H1 (cell line): ENCODE measurements at regions of chr13 and their contacts with region 1.

Region 1: GRCh38 chr13:51241720-51242119 is 19.5 kb downstream of the FAM124A start:
- DNase-seq: peak in 1 of 2 experiments; percentile 24
- H3K4me3 ChIP-seq: no peak overlapping the region
- H3K27ac ChIP-seq: no peak overlapping the region
- H3K4me1 ChIP-seq: peaks cover 22 to 35% (median 29%) of the 10 kb centered on the region in 4 experiments
- H3K27me3 ChIP-seq: no peaks in the 10 kb centered on the region
- CTCF ChIP-seq: no peak
- EP300 ChIP-seq: no peak
- POLR2A ChIP-seq: no peak
- RAD21 ChIP-seq: no peak

Region 2: DNA sequence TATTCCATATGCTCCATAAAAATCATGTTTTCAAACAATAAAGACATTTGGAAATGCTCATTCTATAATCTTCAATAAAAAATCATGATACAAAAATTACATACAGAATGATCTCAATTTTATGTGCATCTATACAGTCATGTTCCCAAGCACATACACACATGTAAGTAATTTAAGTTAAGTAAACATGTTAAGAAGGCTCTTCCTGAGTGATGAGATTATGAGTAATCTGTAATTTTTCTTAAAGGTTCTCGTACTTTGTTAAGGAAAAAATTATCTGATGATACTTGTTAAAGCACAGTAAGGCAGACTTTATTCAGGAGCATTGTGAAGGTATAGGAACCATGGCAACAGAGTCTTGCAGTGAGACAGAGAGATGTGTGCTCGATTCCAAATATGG is 368.3 kb before region 1 on chr13:
- CTCF ChIA-PET with region 1: no interaction called
- POLR2A ChIA-PET with region 1: no interaction called
- DNase-seq: no peak
- H3K4me3 ChIP-seq: no peak overlapping the region
- H3K27ac ChIP-seq: no peak overlapping the region
- H3K4me1 ChIP-seq: no peaks in the 10 kb centered on the region
- H3K27me3 ChIP-seq: no peaks in the 10 kb centered on the region
- CTCF ChIP-seq: no peak
- EP300 ChIP-seq: no peak
- POLR2A ChIP-seq: no peak
- RAD21 ChIP-seq: no peak

Region 3: DNA sequence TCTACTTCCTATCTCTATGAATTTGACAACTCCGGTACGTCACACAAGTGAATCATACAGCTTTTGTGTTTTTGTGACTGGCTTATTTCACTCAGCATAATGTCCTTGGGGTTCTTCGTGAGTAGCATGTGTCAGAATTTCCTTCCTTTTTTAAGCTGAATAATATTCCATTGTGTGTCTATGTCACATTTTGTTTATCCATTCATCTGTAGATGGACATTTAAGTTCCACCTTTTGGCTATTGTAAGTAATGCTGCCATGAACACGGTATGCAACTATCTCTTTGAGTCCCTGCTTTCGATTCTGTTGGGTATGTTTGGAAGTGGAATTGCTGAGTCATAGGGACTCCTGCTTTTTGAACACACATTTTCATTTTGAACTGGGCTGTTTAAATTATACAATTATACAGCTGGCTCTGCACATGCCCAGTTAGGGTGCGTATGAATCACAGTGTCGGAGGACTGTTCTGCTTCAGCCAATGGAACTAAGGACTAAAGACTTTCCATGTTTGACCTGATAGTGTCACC is 87.6 kb before region 1 on chr13:
- CTCF ChIA-PET with region 1: interaction called, 6 read pairs
- POLR2A ChIA-PET with region 1: interaction called, 10 read pairs
- DNase-seq: peak in 1 of 2 experiments; percentile 31
- H3K4me3 ChIP-seq: no peak overlapping the region
- H3K27ac ChIP-seq: no peak overlapping the region
- H3K4me1 ChIP-seq: peaks cover 8 to 23% (median 18%) of the 10 kb centered on the region in 4 experiments; a peak in 6 of 7 replicates
- H3K27me3 ChIP-seq: no peaks in the 10 kb centered on the region
- CTCF ChIP-seq: no peak
- EP300 ChIP-seq: no peak
- POLR2A ChIP-seq: no peak
- RAD21 ChIP-seq: no peak

Region 4: DNA sequence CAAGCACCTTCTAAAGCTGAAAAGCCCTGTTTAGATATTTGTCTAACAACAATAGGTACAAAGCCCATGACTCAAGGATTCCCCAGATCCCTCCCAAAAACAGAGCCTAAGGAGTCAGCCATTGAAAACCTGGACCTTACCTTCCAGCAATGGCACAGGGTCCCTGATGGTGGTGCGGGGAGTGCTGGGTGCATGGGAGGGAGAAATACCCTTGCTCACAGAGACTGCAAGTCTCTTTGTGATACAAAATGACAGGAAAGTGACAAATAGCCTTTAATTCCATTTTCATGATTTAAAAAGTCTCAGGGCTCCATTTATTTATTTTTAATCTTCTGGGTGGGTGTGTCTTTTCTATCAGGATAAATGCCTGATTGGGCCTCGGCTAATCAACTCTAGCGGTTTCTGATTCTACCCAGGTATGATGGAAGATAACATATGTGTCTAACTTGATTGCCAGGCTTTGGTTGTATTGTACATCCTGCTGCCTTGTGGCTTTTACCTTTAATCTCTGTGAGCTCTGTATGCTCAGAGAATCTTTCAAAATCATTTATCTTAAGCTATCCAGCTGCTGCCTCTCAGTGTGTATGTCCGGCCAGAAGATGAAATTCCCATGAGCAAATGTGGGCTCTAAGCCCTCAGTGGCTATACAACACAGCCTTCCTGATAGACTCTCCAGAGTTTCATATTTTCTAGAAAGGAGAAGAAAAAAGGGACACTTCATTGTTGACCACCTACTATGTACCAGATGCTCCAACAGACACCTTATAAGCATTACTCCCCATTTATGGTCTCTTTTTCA is 74.1 kb before region 1 on chr13:
- CTCF ChIA-PET with region 1: no interaction called
- POLR2A ChIA-PET with region 1: interaction called, 15 read pairs
- DNase-seq: peak in 1 of 2 experiments; percentile 23
- H3K4me3 ChIP-seq: no peak overlapping the region
- H3K27ac ChIP-seq: peak overlapping the region; percentile 83; the same call in 1 of the 2 replicates
- H3K4me1 ChIP-seq: peaks cover 6 to 14% (median 12%) of the 10 kb centered on the region in 4 experiments; a peak in 6 of 7 replicates
- H3K27me3 ChIP-seq: no peaks in the 10 kb centered on the region
- CTCF ChIP-seq: no peak
- EP300 ChIP-seq: no peak
- POLR2A ChIP-seq: no peak
- RAD21 ChIP-seq: no peak

Region 5: DNA sequence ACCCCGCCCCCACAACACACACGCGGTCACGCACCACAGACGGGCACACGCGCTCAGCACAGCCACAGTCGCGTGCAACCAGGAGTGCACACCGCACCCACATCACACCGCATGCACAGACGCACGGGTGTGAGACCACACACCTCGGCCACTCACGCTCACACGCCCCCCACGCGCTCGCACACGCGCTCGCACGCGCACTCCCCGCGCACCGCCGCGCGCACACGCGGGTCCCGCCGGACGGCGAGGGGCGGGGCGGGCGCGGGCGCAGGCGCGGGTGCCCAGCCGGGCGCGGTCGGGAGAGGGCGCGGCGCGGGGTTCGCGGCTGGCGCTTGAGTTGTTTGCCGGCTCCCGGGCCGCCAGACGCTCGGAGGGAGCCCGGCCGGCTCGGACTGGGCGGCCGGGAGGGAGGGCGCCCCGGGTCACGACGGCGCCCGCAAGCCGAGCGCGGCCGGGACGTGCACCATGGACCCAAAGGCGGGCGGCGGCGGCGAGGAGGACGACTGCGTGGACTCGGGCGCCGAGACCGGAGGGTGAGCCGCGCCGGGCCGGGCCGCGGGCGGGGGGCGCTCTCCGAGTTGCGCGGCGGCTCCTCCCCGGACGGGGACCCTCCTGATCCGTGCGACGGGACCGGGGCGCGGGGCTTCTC is 19.6 kb before region 1 on chr13 and contains the start of gene FAM124A:
- CTCF ChIA-PET with region 1: interaction called, 31 read pairs
- POLR2A ChIA-PET with region 1: interaction called, 77 read pairs
- DNase-seq: peak in 1 of 2 experiments; percentile 80
- H3K4me3 ChIP-seq: peak within 1 kb of the TSS; percentile 80 to 96 (median 89)
- H3K27ac ChIP-seq: peak within 1 kb of the TSS; percentile 24; the same call in 1 of the 2 replicates
- H3K4me1 ChIP-seq: peaks cover 6 to 23% (median 22%) of the 10 kb centered on the region in 4 experiments
- H3K27me3 ChIP-seq: no peaks in the 10 kb centered on the region
- CTCF ChIP-seq: peak; percentile 10 to 71 (median 46); a peak in 3 of 4 replicates
- EP300 ChIP-seq: no peak
- POLR2A ChIP-seq: peak in 1 of 2 experiments; percentile 42; a peak in 2 of 3 replicates
- RAD21 ChIP-seq: peak in 1 of 2 experiments; percentile 43; a peak in 2 of 4 replicates
- total RNA-seq, gene FAM124A: 47.1 and 49.9 TPM in 2 replicates

Region 6: GRCh38 chr13:51230477-51231105 is 11.1 kb before region 1 on chr13:
- CTCF ChIA-PET with region 1: interaction called, 31 read pairs
- POLR2A ChIA-PET with region 1: interaction called, 77 read pairs
- DNase-seq: no peak
- H3K4me3 ChIP-seq: no peak overlapping the region
- H3K27ac ChIP-seq: no peak overlapping the region
- H3K4me1 ChIP-seq: peaks cover 6 to 31% (median 18%) of the 10 kb centered on the region in 4 experiments
- H3K27me3 ChIP-seq: no peaks in the 10 kb centered on the region
- CTCF ChIP-seq: no peak
- EP300 ChIP-seq: no peak
- POLR2A ChIP-seq: no peak
- RAD21 ChIP-seq: no peak

Region 7: GRCh38 chr13:51262501-51263211 is 20.9 kb after region 1 on chr13:
- CTCF ChIA-PET with region 1: interaction called, 6 read pairs
- POLR2A ChIA-PET with region 1: interaction called, 12 read pairs
- DNase-seq: no peak
- H3K4me3 ChIP-seq: no peak overlapping the region
- H3K27ac ChIP-seq: no peak overlapping the region
- H3K4me1 ChIP-seq: peaks cover 5 to 22% (median 14%) of the 10 kb centered on the region in 4 experiments; a peak in 6 of 7 replicates
- H3K27me3 ChIP-seq: no peaks in the 10 kb centered on the region
- CTCF ChIP-seq: no peak
- EP300 ChIP-seq: no peak
- POLR2A ChIP-seq: no peak
- RAD21 ChIP-seq: no peak

Region 8: GRCh38 chr13:51465124-51465523 is 223.4 kb after region 1 on chr13:
- CTCF ChIA-PET with region 1: no interaction called
- POLR2A ChIA-PET with region 1: no interaction called
- DNase-seq: no peak
- H3K4me3 ChIP-seq: no peak overlapping the region
- H3K27ac ChIP-seq: no peak overlapping the region
- H3K4me1 ChIP-seq: no peaks in the 10 kb centered on the region
- H3K27me3 ChIP-seq: no peaks in the 10 kb centered on the region
- CTCF ChIP-seq: no peak
- EP300 ChIP-seq: no peak
- POLR2A ChIP-seq: no peak
- RAD21 ChIP-seq: no peak